SK-N-SH (cell line): ENCODE measurements at regions of chr12 and their contacts with region 1.

Region 1: GRCh38 chr12:112450725-112451124 is 32.0 kb downstream of the PTPN11 start:
- DNase-seq: peak; percentile 47
- H3K4me3 ChIP-seq: no peak overlapping the region
- H3K27ac ChIP-seq: peak overlapping the region in 1 of 2 experiments; percentile 12; a peak in 1 of 4 replicates
- H3K4me1 ChIP-seq: no peaks in the 10 kb centered on the region
- H3K27me3 ChIP-seq: no peaks in the 10 kb centered on the region
- CTCF ChIP-seq: no peak
- EP300 ChIP-seq: no peak
- RAD21 ChIP-seq: peak; percentile 86

Region 2: GRCh38 chr12:111570084-111570961 is 880.4 kb before region 1 on chr12:
- CTCF ChIA-PET with region 1: no interaction called
- POLR2A ChIA-PET with region 1: no interaction called
- DNase-seq: no peak
- H3K4me3 ChIP-seq: no peak overlapping the region
- H3K27ac ChIP-seq: peak overlapping the region; percentile 24 to 87; a peak in 3 of 4 replicates
- H3K4me1 ChIP-seq: peaks cover 3 to 23% of the 10 kb centered on the region in 2 experiments; a peak in 2 of 4 replicates
- H3K27me3 ChIP-seq: no peaks in the 10 kb centered on the region
- CTCF ChIP-seq: no peak
- EP300 ChIP-seq: peak in 1 of 2 experiments; percentile 51; a peak in 1 of 4 replicates
- RAD21 ChIP-seq: no peak

Region 3: GRCh38 chr12:112439769-112440168 is 11.0 kb before region 1 on chr12:
- CTCF ChIA-PET with region 1: interaction called, 18 read pairs
- POLR2A ChIA-PET with region 1: no interaction called
- DNase-seq: no peak
- H3K4me3 ChIP-seq: no peak overlapping the region
- H3K27ac ChIP-seq: no peak overlapping the region
- H3K4me1 ChIP-seq: no peaks in the 10 kb centered on the region
- H3K27me3 ChIP-seq: no peaks in the 10 kb centered on the region
- CTCF ChIP-seq: no peak
- EP300 ChIP-seq: no peak
- RAD21 ChIP-seq: no peak

Region 4: DNA sequence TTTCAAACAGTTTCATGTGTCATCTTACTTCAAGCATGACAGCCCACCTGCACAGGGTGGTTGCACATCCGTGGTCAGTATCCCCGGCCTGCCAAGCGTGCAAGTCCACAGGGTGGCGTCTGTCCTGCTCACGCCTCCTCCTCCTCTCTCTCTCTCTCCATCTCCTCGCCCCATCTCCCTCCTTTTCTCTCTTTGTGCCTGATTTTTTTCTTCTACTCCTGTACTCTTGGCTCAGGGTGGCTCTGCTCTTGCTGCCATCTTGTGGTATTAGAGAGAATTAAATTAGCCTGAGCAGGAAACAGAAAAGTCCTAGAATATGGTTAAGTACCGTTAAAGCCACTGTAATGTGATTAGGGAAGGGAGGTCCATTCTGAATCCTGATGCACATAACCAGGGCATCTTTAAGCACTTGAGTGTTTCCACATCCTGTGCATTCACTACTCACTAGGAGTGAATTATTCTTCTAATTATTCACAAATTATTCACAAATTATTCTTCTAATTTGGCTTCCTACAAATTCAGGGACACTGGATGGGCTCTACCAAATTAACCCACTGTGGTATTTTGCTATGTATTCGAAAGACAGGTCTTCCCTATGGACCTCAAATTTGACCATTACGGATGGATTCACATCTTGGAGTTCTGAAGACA is 580.3 kb after region 1 on chr12:
- CTCF ChIA-PET with region 1: interaction called, 17 read pairs
- POLR2A ChIA-PET with region 1: no interaction called
- DNase-seq: peak; percentile 71
- H3K4me3 ChIP-seq: no peak overlapping the region; a peak in 1 of 4 replicates
- H3K27ac ChIP-seq: no peak overlapping the region
- H3K4me1 ChIP-seq: peaks cover 0 to 4% of the 10 kb centered on the region in 2 experiments; a peak in 1 of 4 replicates
- H3K27me3 ChIP-seq: no peaks in the 10 kb centered on the region; the same call in 1 of the 2 replicates
- CTCF ChIP-seq: peak; percentile 76
- EP300 ChIP-seq: no peak; a peak in 1 of 4 replicates
- RAD21 ChIP-seq: peak; percentile 85